PC-9 (cell line): ENCODE measurements at regions of chr10 and their contacts with region 1.

Region 1: DNA sequence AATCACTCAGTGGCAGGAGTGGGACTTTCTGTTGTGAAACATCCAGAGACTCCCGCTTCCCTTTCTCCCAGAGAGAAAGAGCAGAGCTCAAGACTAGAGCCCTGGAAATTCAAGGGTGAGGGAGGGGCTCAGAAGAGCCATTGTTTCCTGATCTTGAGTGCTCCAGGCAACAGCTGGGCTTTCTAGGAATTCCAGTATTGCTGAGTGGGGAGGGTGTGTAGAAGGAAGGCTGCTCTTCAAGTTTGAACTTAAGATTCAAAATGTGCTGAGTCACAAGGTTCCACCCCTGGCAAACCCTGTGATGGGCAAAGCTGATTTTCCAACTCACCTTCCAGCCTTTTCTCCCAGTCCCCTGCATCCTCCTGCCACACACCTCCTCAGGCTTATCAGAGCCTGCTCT is 42.3 kb upstream of the MSRB2 start:
- DNase-seq: peak; percentile 72 to 78
- H3K4me3 ChIP-seq: no peak overlapping the region
- H3K27ac ChIP-seq: peak overlapping the region; percentile 54
- H3K4me1 ChIP-seq: peaks cover 32% of the 10 kb centered on the region
- H3K27me3 ChIP-seq: no peaks in the 10 kb centered on the region
- CTCF ChIP-seq: no peak

Region 2: GRCh38 chr10:22630234-22631174 is 422.5 kb before region 1 on chr10:
- CTCF ChIA-PET with region 1: no interaction called
- POLR2A ChIA-PET with region 1: no interaction called
- intact Hi-C with region 1: loop called (anchors 5 kb)
- DNase-seq: no peak
- H3K4me3 ChIP-seq: no peak overlapping the region
- H3K27ac ChIP-seq: no peak overlapping the region
- H3K4me1 ChIP-seq: peaks cover 7% of the 10 kb centered on the region
- H3K27me3 ChIP-seq: no peaks in the 10 kb centered on the region
- CTCF ChIP-seq: no peak

Region 3: GRCh38 chr10:23095404-23095965 is 42.4 kb after region 1 on chr10 and contains the start of gene MSRB2:
- CTCF ChIA-PET with region 1: no interaction called
- POLR2A ChIA-PET with region 1: no interaction called
- intact Hi-C with region 1: loop called (anchors 2 kb)
- DNase-seq: peak; percentile 64 to 80
- H3K4me3 ChIP-seq: peak within 1 kb of the TSS; percentile 75
- H3K27ac ChIP-seq: 0 out of 2 replicates have a peak within 1 kb of the TSS, but pooled peaks have one; percentile 6
- H3K4me1 ChIP-seq: peaks cover 13% of the 10 kb centered on the region
- H3K27me3 ChIP-seq: no peaks in the 10 kb centered on the region
- CTCF ChIP-seq: no peak
- total RNA-seq, gene MSRB2: 28.3 and 31.7 TPM in 2 replicates